ENCODE measurements at regions of chr15 and their contacts with region 1.

Region 1: DNA sequence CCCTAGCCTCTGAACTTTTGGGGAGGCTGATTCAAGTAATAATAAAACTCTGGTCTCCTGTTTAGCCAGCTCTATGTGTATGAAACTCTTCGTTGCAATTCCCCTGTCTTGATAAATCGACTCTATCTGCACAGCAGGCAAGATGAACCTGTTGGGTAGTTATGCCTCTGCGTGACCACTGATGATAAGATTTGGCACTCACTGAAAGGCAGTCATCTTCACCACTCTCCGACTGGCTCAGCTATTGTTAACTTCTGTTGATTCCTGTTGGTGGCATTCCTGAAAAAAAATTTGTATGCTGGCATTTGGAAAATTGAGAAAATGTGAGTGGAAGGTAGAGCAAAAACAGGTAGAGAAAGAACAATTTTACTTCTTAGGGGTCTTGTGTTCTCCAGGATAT is 11.8 kb downstream of the GLDN start:
- DNase-seq: no peak
- ATAC-seq: no peak
- H3K4me3 ChIP-seq: no peak overlapping the region
- H3K27ac ChIP-seq: no peak overlapping the region
- H3K4me1 ChIP-seq: peaks cover 2 to 53% (median 29%) of the 10 kb centered on the region in 9 donors
- H3K27me3 ChIP-seq: no peaks in the 10 kb centered on the region
- CTCF ChIP-seq: no peak

Region 2: DNA sequence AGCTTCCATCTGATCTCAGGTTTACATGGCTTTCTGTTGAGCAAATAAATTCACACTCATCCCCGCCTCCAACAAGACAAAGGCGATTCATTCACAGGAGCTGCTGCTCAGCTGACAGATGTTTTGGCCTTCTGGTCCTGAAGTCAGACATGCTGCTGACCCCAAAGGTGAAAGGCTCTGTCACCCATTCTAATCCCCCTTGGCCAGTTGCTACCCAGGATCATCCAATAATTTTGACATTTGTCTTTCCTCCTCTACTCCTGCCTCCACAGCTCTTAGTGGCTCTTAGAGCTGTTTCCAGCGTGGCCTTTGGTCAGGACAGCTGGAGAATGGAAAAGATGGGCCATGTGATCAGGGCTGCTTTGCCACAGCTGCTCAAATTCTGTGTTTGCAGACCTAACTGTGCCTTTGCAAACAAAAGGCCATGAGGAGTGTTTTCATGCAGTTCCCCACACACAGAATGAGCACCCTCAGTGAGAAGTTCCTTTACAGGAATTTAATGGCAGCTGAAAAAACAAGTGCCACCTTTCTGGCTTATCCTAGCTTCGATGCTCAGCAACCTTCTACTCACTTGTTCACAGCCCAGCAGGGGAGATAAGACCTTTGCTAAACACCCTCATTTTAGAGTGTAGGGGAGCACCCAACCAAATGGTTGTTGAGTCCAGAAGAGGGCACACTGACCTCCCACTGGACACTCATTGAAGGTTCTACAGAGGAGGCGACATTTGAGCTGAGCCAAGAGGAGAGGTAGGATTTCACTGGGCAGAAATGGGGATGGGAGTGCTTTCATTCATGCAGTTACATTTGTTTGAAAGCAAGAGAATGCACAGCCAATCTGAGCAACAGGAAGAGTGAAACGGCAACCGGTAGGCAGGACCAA is 53.8 kb before region 1 on chr15:
- intact Hi-C with region 1: loop called in 1 of 10 experiments (anchors 5 kb)
- DNase-seq: no peak
- ATAC-seq: peak in 4 of 8 donors; percentile 35 to 60 (median 45)
- H3K4me3 ChIP-seq: no peak overlapping the region
- H3K27ac ChIP-seq: peak overlapping the region in 3 of 10 donors; percentile 1 to 56 (median 17)
- H3K4me1 ChIP-seq: peaks cover 0 to 19% (median 8%) of the 10 kb centered on the region in 9 donors
- H3K27me3 ChIP-seq: no peaks in the 10 kb centered on the region
- CTCF ChIP-seq: no peak

Region 3: DNA sequence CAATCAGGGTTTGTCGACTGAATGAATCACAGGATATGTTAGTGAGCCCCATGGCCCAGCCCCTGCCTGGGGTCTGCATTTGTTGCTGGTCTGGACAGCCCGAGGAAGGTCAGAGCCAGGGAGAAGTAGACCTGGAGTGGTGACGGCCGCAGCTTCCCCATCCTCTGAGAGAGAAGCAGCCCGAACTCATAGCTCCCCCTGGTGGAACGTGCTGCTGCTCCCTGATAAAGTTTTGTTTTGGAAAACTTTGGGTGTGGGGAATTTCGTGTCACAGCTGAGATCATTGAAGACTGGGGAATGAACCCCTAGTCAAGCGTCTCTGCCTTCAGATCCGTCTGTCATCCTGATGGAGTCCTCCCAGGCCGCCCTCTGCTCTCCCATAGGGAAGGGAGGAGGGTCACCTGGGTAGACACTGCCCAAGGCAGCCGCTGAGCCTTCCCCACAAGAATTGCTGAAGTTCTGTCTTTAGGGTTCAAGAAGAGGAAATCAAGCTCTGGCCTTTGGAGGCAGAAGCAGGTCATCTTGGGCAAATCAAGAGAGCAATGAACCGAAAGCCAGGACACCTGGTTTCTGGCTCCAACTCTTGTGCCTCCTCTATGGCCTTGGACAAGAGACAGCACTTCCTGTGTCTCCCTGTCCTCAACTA is 48.7 kb after region 1 on chr15:
- intact Hi-C with region 1: no loop called
- DNase-seq: peak; percentile 27 to 34
- ATAC-seq: peak in 5 of 8 donors; percentile 46 to 59 (median 47)
- H3K4me3 ChIP-seq: no peak overlapping the region
- H3K27ac ChIP-seq: no peak overlapping the region
- H3K4me1 ChIP-seq: peaks cover 0 to 6% (median 0%) of the 10 kb centered on the region in 9 donors
- H3K27me3 ChIP-seq: peaks cover 0 to 3% (median 0%) of the 10 kb centered on the region in 7 donors
- CTCF ChIP-seq: peak in 8 of 9 donors; percentile 34 to 72 (median 54)

Region 4: DNA sequence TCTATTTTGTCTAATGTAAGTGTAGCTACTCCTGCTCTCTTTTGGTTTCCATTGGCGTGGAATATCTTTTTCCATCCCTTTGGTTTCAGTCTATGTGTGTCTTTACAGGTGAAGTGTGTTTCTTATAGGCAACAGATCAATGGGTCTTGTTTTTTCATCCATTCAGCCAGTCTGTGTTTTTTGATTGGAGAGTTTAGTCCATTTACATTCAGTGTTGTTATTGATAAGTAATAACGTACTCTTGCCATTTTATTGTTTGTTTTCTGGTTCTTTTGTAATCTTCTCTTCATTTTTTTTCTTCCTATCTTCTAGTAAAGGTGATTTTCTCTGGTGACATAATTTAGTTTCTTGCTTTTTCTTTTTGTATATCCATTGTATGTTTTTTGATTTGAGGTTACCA is 85.3 kb after region 1 on chr15:
- intact Hi-C with region 1: no loop called
- DNase-seq: no peak
- ATAC-seq: no peak
- H3K4me3 ChIP-seq: no peak overlapping the region
- H3K27ac ChIP-seq: no peak overlapping the region
- H3K4me1 ChIP-seq: no peaks in the 10 kb centered on the region
- H3K27me3 ChIP-seq: no peaks in the 10 kb centered on the region
- CTCF ChIP-seq: no peak

Region 5: DNA sequence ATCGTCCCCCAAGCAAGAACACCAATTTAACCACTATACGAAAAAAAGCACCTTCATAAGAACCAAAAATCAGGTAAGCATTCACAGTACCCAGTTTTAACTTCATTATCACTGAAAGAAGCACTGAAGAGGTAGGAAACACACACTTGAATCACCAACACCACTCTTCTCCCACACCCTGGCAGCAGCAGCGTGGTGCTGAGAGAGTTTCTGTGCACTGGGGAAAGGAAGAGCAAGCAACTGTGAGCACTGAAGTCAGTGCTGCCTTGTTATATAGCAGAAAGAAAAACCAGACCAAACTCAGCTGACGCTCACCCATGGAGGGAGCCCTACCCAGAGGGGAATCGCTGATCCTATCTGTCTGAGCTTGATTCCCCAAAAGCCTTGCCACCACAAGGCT is 171.1 kb after region 1 on chr15:
- intact Hi-C with region 1: no loop called
- DNase-seq: no peak
- ATAC-seq: no peak
- H3K4me3 ChIP-seq: no peak overlapping the region
- H3K27ac ChIP-seq: no peak overlapping the region
- H3K4me1 ChIP-seq: no peaks in the 10 kb centered on the region
- H3K27me3 ChIP-seq: no peaks in the 10 kb centered on the region
- CTCF ChIP-seq: no peak